ENCODE measurements at regions of chr3 and their contacts with region 1.

Region 1: DNA sequence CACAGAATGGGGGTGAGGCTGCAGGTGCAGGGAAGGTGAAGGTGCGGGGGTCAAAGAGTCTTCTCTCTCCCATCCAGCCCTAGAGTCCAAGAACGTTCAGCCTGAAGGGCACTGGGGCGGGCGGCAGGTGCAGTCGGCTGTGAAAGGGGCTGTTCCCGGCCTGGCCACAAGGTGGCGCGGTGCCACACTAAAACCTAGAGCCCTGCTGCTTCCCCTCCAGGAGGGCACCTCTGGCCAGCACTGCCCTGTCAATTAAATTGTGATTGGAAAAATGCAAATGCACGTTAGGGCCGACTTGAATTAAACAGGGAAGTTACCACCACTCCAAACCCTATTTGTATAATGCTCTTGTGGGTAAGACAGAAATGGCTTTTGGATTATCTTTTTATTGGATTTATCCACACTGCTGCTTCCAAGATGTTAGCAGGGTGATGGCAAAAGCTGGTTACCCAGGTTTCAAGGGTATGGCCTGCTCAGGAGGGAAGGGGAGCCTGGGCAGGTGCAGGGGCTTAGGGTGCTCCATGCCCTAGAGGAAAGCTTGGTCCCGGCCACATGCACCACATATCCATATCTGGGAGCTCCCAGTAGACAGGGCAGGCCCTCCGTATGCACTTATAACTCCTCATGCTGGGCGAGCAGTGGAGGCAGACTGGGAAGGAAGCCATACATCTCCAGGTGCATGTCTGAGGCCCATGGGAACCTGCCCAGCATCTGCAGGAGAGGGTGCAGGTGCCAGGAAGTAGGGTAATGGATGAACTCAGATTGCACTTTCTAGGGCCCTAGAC is 119.8 kb downstream of the ADCY5 start:
- DNase-seq: peak; percentile 86
- ATAC-seq: peak; percentile 96
- H3K4me3 ChIP-seq: no peak overlapping the region
- H3K27ac ChIP-seq: no peak overlapping the region
- H3K4me1 ChIP-seq: no peaks in the 10 kb centered on the region
- H3K27me3 ChIP-seq: peaks cover 41% of the 10 kb centered on the region
- CTCF ChIP-seq: peak; percentile 96

Region 2: DNA sequence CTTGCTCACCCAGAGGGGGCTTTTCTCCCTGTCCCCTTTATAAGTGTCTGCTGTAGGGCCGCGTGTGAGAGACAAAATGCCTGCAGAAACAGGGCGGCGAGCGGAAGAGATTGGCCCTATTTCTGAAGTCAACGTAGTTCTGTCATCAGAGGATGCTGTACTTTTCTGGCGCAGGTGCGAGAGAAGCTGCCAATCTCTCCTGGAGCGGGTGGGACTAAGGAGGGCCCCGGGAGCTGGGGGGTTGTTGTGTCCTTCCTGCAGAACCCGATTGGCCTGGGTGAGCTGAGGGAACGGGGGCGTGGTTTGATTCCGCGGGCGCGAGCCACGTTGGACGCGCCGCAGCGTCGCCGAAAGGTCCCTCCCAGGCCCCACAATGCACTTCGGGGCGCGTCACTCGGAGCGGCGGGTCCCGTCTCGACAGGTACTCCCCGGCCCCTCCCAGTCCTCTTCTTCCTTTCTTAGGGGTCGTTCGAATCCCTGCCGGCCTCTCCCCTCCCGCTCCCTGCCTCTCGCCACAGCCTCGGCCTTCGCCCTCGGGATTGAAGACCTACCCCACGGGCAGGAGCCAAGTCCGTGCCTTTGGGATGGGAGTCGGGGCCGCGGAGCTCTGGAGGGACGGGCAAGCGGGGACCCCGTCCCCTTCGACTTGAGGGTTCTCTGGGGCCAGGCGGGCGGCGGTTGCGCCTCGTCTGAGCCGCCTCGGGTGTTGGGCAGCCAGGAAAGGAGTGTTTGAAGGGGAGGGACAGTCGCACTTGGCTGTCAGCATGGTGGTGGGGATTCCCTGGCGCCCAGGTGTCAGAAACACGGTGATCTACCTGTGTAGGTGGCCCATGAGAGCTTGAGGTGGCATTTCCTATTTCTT is 127.2 kb before region 1 on chr3 and contains the start of gene SEC22A:
- CTCF ChIA-PET with region 1: no interaction called
- POLR2A ChIA-PET with region 1: no interaction called
- intact Hi-C with region 1: no loop called
- DNase-seq: peak; percentile 99
- ATAC-seq: peak; percentile 99
- H3K4me3 ChIP-seq: peak within 1 kb of the TSS; percentile 96
- H3K27ac ChIP-seq: peak within 1 kb of the TSS; percentile 25
- H3K4me1 ChIP-seq: peaks cover 14% of the 10 kb centered on the region
- H3K27me3 ChIP-seq: no peaks in the 10 kb centered on the region
- CTCF ChIP-seq: no peak
- total RNA-seq, gene SEC22A: 34.3 and 37.9 TPM in 2 replicates

Region 3: DNA sequence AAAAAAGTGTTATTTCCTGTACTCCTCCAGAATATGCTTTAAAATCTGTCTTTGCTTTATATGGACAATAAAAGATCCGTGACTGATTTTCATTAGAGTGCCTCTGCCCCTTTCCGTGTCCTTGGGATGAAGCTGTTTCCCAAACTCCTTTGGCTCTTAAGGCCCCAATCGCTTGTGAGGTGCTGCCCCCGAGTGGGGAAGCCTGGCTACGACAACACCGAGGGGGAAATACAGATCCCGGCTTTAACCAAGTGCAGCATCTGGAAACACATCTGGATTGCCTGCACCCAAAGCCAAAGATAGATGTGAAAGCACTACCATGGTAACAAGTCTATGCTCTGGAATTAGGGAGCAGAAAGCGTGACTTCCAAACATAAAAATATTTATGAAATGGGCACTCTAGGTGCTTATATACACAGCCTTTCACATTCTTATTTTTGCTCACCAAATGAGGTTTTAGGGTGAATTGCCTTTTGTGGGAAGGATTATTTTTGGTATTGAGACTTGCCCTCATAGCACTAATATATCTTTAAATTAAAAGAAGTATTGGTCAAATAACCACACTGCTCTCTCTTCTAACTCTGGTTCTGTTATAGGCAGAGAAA is 160.5 kb after region 1 on chr3:
- CTCF ChIA-PET with region 1: interaction called, 4 read pairs
- POLR2A ChIA-PET with region 1: no interaction called
- intact Hi-C with region 1: loop called (anchors 1 kb)
- DNase-seq: peak; percentile 84
- ATAC-seq: peak; percentile 87
- H3K4me3 ChIP-seq: no peak overlapping the region
- H3K27ac ChIP-seq: no peak overlapping the region
- H3K4me1 ChIP-seq: no peaks in the 10 kb centered on the region
- H3K27me3 ChIP-seq: no peaks in the 10 kb centered on the region
- CTCF ChIP-seq: peak; percentile 98

Region 4: DNA sequence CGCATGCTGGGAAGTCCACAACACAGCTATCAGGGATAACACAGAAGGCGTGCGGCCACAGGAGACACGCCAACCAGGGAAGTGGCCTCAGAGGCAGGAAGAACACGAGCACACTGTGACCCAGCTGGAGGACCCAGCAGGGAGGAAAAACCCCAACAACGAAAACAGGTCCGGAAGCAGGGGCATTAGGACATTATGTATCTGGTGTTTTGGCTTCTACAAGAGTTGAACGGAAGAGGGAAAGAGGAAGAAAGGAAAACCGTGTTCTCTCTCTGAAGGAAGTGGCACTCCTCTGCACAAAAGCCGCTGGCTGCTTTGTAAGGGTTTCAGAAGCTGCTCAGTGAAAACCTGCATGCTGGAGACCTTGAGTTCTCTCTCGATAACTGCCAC is 194.0 kb after region 1 on chr3:
- CTCF ChIA-PET with region 1: no interaction called
- POLR2A ChIA-PET with region 1: no interaction called
- intact Hi-C with region 1: no loop called
- DNase-seq: no peak
- ATAC-seq: no peak
- H3K4me3 ChIP-seq: no peak overlapping the region
- H3K27ac ChIP-seq: no peak overlapping the region
- H3K4me1 ChIP-seq: no peaks in the 10 kb centered on the region
- H3K27me3 ChIP-seq: no peaks in the 10 kb centered on the region
- CTCF ChIP-seq: no peak

Region 5: DNA sequence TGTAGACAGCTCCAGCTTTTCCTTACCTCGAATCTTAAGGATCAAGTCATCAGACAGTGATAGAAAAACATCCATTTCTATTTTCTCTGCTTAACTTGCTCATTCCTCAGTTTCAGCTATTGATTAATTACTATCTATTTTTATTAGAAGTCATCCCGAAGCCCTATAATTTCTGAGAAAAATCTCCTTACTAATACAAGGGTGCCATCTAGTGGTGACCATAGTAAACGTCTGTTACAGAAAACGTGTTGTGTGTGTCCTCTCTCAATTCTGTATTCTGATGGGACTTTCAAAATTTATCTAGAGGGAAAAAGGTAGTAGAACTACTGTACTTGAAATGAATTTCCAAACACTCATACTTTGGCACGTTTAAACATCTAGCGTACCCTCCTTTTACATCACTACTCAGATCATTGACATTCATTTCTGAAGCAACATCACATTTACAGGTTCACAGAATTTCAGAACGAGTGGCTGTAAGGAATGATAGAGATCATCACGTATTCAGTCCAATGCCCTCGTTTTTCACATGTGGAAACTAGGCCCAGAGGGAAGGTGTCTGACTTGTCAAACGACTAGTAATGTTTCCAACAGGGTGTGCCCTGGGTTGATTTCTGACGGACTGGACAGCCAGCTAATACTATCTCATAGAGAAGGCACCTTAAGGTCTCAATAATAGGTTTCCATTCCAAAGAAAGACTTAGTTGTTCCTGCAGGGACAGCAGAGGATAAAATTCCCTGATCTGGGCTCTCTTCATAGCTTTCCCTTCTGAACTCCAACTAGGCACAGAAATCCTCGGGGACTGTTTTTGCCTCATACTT is 230.2 kb after region 1 on chr3:
- CTCF ChIA-PET with region 1: no interaction called
- POLR2A ChIA-PET with region 1: no interaction called
- intact Hi-C with region 1: loop called (anchors 1 kb)
- DNase-seq: peak; percentile 74
- ATAC-seq: peak; percentile 48
- H3K4me3 ChIP-seq: no peak overlapping the region
- H3K27ac ChIP-seq: no peak overlapping the region
- H3K4me1 ChIP-seq: no peaks in the 10 kb centered on the region
- H3K27me3 ChIP-seq: no peaks in the 10 kb centered on the region
- CTCF ChIP-seq: peak; percentile 93

Measured in PC-3 (cell line).